A673 (cell line): ENCODE measurements at regions of chr15 and their contacts with region 1.

Region 1: GRCh38 chr15:31352911-31353811 is 26.5 kb downstream of the KLF13 start:
- DNase-seq: peak; percentile 7
- H3K4me3 ChIP-seq: no peak overlapping the region
- H3K27ac ChIP-seq: peak overlapping the region; percentile 77
- H3K4me1 ChIP-seq: peaks cover 17% of the 10 kb centered on the region
- H3K27me3 ChIP-seq: no peaks in the 10 kb centered on the region
- CTCF ChIP-seq: no peak

Region 2: DNA sequence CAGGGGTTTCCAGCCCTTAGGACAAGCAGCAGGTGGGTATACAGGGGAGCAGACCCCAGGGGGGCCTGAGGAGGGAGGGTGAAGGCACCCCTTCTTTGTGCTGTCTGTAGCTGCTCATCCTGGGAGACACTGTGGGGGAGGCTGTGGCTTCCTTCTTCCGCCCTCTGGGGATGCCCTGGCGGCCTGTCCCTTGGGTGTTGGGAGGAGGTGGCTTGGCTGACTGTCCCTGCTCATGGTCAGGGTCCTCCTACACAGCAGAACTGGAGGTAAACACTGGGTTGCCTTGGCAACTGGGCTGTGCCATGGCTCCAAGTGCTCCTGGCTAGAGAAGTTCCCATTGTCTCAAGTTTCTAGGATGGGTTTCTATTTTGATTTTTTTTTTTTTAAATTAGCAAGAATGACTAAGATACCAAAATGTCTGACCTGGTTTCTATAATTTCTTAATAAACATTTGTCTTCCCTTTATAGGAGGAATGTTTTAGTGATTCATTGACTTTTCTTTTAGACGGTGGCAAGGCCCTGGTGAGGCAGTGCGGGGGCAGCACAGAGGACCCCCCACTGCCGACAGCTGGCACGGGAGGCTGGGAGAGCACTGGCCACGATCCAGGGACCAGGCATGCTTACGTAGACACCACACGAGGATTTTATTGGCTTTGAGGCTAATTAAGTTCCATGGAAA is 14.1 kb before region 1 on chr15:
- CTCF ChIA-PET with region 1: no interaction called
- POLR2A ChIA-PET with region 1: no interaction called
- intact Hi-C with region 1: no loop called
- DNase-seq: peak; percentile 73
- H3K4me3 ChIP-seq: no peak overlapping the region
- H3K27ac ChIP-seq: peak overlapping the region; percentile 57
- H3K4me1 ChIP-seq: peaks cover 25% of the 10 kb centered on the region
- H3K27me3 ChIP-seq: no peaks in the 10 kb centered on the region
- CTCF ChIP-seq: no peak

Region 3: GRCh38 chr15:31365655-31366127 is 12.5 kb after region 1 on chr15:
- CTCF ChIA-PET with region 1: no interaction called
- POLR2A ChIA-PET with region 1: interaction called, 10 read pairs
- intact Hi-C with region 1: no loop called
- DNase-seq: peak; percentile 89
- H3K4me3 ChIP-seq: peak overlapping the region; percentile 26
- H3K27ac ChIP-seq: peak overlapping the region; percentile 64
- H3K4me1 ChIP-seq: peaks cover 36% of the 10 kb centered on the region
- H3K27me3 ChIP-seq: no peaks in the 10 kb centered on the region
- CTCF ChIP-seq: peak; percentile 54

Region 4: DNA sequence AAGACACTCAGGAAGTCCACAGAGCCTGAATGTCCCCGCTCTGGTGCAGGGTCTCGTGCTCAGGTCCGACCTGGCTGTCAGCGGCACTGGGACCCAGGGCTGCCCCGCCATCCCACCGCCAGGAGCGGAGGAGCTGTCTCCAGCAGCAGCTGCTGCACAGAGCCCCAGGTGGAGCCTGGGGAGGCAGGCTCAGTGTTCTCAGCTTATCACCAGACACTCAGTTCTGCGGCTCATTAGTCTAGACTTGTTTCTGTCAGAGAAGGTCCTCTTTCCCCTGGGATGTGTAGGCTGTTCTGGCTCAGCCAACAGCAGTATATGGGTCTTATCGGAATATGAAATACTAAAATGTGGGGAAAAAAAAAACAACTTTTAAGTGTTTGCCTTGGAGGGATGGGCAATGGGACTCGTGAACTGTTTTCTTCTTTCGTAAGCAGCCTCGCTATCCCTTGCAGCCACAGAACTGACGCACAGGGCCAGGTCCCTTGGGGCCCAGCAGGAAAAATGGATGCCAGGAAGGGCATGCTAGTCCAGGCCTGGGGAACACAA is 49.4 kb after region 1 on chr15:
- CTCF ChIA-PET with region 1: no interaction called
- POLR2A ChIA-PET with region 1: no interaction called
- intact Hi-C with region 1: loop called (anchors 5 kb)
- DNase-seq: no peak
- H3K4me3 ChIP-seq: no peak overlapping the region
- H3K27ac ChIP-seq: no peak overlapping the region
- H3K4me1 ChIP-seq: no peaks in the 10 kb centered on the region
- H3K27me3 ChIP-seq: no peaks in the 10 kb centered on the region
- CTCF ChIP-seq: no peak